Prostate gland (tissue), 2 donors: ENCODE measurements at regions of chr4 and their contacts with region 1.

Region 1: GRCh38 chr4:84019626-84020025 is 479.5 kb downstream of the NKX6-1 start:
- DNase-seq: no peak
- H3K4me3 ChIP-seq: no peak overlapping the region
- H3K27ac ChIP-seq: no peak overlapping the region
- H3K4me1 ChIP-seq: no peaks in the 10 kb centered on the region
- H3K27me3 ChIP-seq: no peaks in the 10 kb centered on the region
- CTCF ChIP-seq: no peak
- POLR2A ChIP-seq: no peak

Region 2: DNA sequence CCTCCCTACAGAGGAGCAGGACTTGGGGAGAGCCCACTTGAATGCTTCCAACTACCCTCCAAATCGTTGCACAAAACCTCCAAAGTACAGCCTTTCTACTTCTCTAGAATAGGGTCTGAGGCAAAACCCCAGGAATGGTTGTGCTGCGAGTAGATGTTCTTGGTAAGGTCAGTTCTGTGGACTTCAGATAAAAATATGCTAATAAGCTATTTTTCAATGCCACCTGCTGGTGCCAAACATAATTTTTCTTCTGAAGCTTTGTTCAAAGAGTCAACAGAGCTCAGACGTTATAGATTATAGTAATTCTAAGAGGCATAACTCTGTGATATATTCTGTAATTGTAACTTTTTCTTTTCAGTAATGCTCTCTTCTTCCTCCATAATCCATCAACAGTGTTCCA is 58.1 kb before region 1 on chr4:
- intact Hi-C with region 1: loop called (anchors 2 kb)
- DNase-seq: no peak
- H3K4me3 ChIP-seq: no peak overlapping the region
- H3K27ac ChIP-seq: no peak overlapping the region
- H3K4me1 ChIP-seq: no peaks in the 10 kb centered on the region
- H3K27me3 ChIP-seq: no peaks in the 10 kb centered on the region
- CTCF ChIP-seq: no peak
- POLR2A ChIP-seq: no peak